HEK293T (cell line): ENCODE measurements at regions of chr10 and their contacts with region 1.

Region 1: GRCh38 chr10:58291538-58292174 is 22.7 kb downstream of the CISD1 start:
- DNase-seq: peak; percentile 35

Region 2: GRCh38 chr10:58177362-58177947 is 114.2 kb before region 1 on chr10:
- CTCF ChIA-PET with region 1: interaction called, 22 read pairs
- POLR2A ChIA-PET with region 1: interaction called, 4 read pairs
- DNase-seq: peak; percentile 22

Region 3: GRCh38 chr10:58268870-58269605 is 22.6 kb before region 1 on chr10 and contains the start of gene CISD1:
- CTCF ChIA-PET with region 1: interaction called, 3 read pairs
- POLR2A ChIA-PET with region 1: interaction called, 11 read pairs
- DNase-seq: peak; percentile 96